Aorta (tissue), 5 donors: ENCODE measurements at regions of chrX and their contacts with region 1.

Region 1: GRCh38 chrX:43836435-43837184 is 45.6 kb downstream of the MAOB start:
- DNase-seq: no peak
- ATAC-seq: no peak
- H3K4me3 ChIP-seq: no peak overlapping the region
- H3K27ac ChIP-seq: no peak overlapping the region
- H3K4me1 ChIP-seq: no peaks in the 10 kb centered on the region
- H3K27me3 ChIP-seq: no peaks in the 10 kb centered on the region

Region 2: GRCh38 chrX:42466332-42467046 is 1370.1 kb before region 1 on chrX:
- intact Hi-C with region 1: no loop called
- DNase-seq: no peak
- ATAC-seq: no peak
- H3K4me3 ChIP-seq: no peak overlapping the region
- H3K27ac ChIP-seq: no peak overlapping the region
- H3K4me1 ChIP-seq: no peaks in the 10 kb centered on the region
- H3K27me3 ChIP-seq: no peaks in the 10 kb centered on the region

Region 3: DNA sequence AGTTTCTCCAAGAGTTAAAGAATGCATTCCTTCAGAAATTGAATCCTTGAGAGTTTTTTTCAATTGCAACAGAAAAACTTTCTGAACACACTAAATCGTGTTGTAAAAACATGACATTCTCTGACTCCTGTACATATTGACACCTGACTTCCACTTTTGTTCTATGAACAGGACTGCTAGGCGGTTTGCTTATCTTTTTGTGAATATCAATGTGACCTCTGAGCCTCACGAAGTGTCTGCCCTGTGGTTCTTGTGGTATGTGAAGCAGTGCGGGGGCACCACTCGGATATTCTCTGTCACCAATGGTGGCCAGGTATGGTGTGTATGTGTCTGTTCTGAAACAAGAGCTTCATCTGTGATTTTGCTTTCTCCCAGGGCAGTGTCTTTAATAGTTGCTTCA is 108.6 kb before region 1 on chrX:
- intact Hi-C with region 1: no loop called
- DNase-seq: no peak
- ATAC-seq: no peak
- H3K4me3 ChIP-seq: no peak overlapping the region
- H3K27ac ChIP-seq: no peak overlapping the region
- H3K4me1 ChIP-seq: no peaks in the 10 kb centered on the region
- H3K27me3 ChIP-seq: no peaks in the 10 kb centered on the region

Region 4: DNA sequence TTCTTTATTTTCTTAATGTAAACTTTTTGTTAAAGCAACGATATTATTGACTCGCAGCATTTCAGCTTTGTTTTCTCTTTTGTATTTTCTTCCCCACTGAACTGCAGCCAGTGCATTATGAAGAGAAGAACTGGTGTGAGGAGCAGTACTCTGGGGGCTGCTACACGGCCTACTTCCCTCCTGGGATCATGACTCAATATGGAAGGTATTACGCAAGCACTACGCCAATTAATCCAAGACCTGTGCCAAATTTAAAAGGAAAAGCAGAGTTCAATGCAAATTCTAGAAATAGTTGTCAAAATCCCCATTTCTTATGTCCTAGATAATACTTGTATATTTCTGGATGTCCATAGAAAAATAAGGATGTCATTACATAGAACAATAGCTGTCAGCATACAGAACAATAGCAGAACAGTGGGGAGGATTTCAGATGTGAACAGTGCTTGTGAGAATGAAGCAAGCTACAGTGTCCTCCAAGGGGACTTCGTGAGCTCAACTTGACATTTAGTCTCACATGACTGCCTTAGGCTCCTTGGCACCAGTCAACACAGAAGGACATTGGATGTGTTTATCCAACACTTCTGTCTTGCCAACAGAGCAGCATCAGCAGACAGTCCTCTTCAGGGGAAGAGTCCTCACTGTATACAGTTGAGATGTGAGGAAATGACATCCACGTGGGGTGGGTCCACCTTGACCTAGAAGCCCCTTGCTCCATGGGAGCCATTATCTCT is 94.6 kb before region 1 on chrX:
- intact Hi-C with region 1: no loop called
- DNase-seq: no peak
- ATAC-seq: peak; percentile 78
- H3K4me3 ChIP-seq: no peak overlapping the region
- H3K27ac ChIP-seq: no peak overlapping the region
- H3K4me1 ChIP-seq: no peaks in the 10 kb centered on the region
- H3K27me3 ChIP-seq: no peaks in the 10 kb centered on the region

Region 5: DNA sequence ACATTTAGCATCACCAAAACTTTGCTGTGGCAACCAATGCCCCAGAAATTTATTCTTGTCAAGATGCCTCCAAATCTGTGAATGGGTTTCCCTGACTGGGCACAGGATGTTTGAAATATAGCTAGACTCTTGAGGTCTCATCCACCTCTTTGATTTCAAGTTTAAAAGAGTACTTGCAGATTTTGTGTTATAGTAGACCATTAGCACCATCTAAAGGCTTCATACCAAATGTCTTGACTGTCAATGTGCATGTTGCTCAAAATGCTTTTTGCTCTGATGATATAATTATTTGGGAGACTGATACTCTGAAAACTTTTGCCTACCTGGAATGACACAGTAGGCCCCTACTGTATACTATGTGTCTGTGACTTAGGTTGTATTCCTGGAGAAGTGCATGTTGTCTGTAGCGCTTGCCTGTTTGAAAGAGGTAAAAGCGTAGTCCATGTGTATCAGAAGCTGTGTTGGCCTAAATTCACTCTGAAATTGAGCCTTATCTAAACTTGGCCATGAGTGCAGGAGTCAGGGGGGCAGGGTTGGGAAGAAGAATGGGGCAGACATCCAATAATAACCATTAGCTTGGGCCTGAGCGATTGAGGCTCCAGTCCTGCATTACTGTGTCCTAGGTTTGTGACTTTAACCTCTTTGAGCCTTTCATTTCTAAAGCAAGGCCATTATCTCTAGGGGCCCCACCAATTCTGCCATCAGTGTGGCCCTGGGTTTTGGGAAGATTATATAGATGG is 102.7 kb after region 1 on chrX:
- intact Hi-C with region 1: loop called (anchors 1 to 2 kb)
- DNase-seq: no peak
- ATAC-seq: no peak
- H3K4me3 ChIP-seq: no peak overlapping the region
- H3K27ac ChIP-seq: no peak overlapping the region
- H3K4me1 ChIP-seq: no peaks in the 10 kb centered on the region
- H3K27me3 ChIP-seq: no peaks in the 10 kb centered on the region

Region 6: DNA sequence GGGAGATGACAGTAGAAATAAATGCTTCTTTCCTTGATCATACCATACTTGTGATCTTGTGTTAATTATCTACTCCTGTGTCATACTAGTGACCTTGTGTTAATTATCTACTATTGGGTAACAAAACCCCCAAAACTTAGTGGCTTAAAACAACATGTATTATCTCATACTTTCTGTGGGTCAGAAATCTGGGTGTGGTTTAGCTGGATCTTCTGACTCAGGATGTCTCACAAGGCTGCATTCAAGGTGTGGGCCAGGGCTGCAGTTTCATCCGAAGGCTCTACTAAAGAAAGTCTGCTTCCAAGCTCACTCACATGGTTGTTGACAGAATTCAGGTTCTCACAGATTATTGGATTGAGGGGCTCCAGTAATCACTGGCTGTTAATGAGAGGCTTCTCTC is 206.9 kb after region 1 on chrX:
- intact Hi-C with region 1: no loop called
- DNase-seq: no peak
- ATAC-seq: no peak
- H3K4me3 ChIP-seq: no peak overlapping the region
- H3K27ac ChIP-seq: no peak overlapping the region
- H3K4me1 ChIP-seq: no peaks in the 10 kb centered on the region
- H3K27me3 ChIP-seq: no peaks in the 10 kb centered on the region